B cell (primary cell): ENCODE measurements at regions of chr3 and their contacts with region 1.

Region 1: GRCh38 chr3:377158-377561 is 180.6 kb downstream of the CHL1 start:
- DNase-seq: peak; percentile 65
- ATAC-seq: no peak
- H3K4me3 ChIP-seq: no peak overlapping the region
- H3K4me3 Mint-ChIP-seq: no peak overlapping the region
- H3K27ac ChIP-seq: no peak overlapping the region
- H3K27ac Mint-ChIP-seq: no peak overlapping the region
- H3K4me1 ChIP-seq: no peaks in the 10 kb centered on the region
- H3K4me1 Mint-ChIP-seq: no peaks in the 10 kb centered on the region
- H3K27me3 ChIP-seq: no peaks in the 10 kb centered on the region
- H3K27me3 Mint-ChIP-seq: peaks cover 7% of the 10 kb centered on the region
- CTCF ChIP-seq: peak; percentile 80

Region 2: GRCh38 chr3:46576-46975 is 330.6 kb before region 1 on chr3:
- CTCF ChIA-PET with region 1: interaction called, 21 read pairs
- POLR2A ChIA-PET with region 1: no interaction called
- intact Hi-C with region 1: loop called (anchors 1 kb)
- DNase-seq: no peak
- ATAC-seq: no peak
- H3K4me3 ChIP-seq: no peak overlapping the region
- H3K4me3 Mint-ChIP-seq: no peak overlapping the region
- H3K27ac ChIP-seq: no peak overlapping the region
- H3K27ac Mint-ChIP-seq: no peak overlapping the region
- H3K4me1 ChIP-seq: no peaks in the 10 kb centered on the region
- H3K4me1 Mint-ChIP-seq: peaks cover 2% of the 10 kb centered on the region
- H3K27me3 ChIP-seq: peaks cover 0 to 6% (median under 1%) of the 10 kb centered on the region in 4 experiments
- H3K27me3 Mint-ChIP-seq: peaks cover 10% of the 10 kb centered on the region
- CTCF ChIP-seq: no peak

Region 3: GRCh38 chr3:436053-436452 is 58.9 kb after region 1 on chr3:
- CTCF ChIA-PET with region 1: no interaction called
- POLR2A ChIA-PET with region 1: no interaction called
- intact Hi-C with region 1: no loop called
- DNase-seq: no peak
- ATAC-seq: no peak
- H3K4me3 ChIP-seq: no peak overlapping the region
- H3K4me3 Mint-ChIP-seq: no peak overlapping the region
- H3K27ac ChIP-seq: no peak overlapping the region
- H3K27ac Mint-ChIP-seq: no peak overlapping the region
- H3K4me1 ChIP-seq: no peaks in the 10 kb centered on the region
- H3K4me1 Mint-ChIP-seq: no peaks in the 10 kb centered on the region
- H3K27me3 ChIP-seq: no peaks in the 10 kb centered on the region
- H3K27me3 Mint-ChIP-seq: peaks cover 11% of the 10 kb centered on the region
- CTCF ChIP-seq: no peak

Region 4: GRCh38 chr3:643376-643775 is 266.2 kb after region 1 on chr3:
- CTCF ChIA-PET with region 1: no interaction called
- POLR2A ChIA-PET with region 1: no interaction called
- intact Hi-C with region 1: no loop called
- DNase-seq: no peak
- ATAC-seq: no peak
- H3K4me3 ChIP-seq: no peak overlapping the region
- H3K4me3 Mint-ChIP-seq: no peak overlapping the region
- H3K27ac ChIP-seq: no peak overlapping the region
- H3K27ac Mint-ChIP-seq: no peak overlapping the region
- H3K4me1 ChIP-seq: no peaks in the 10 kb centered on the region
- H3K4me1 Mint-ChIP-seq: no peaks in the 10 kb centered on the region
- H3K27me3 ChIP-seq: no peaks in the 10 kb centered on the region
- H3K27me3 Mint-ChIP-seq: peaks cover 3% of the 10 kb centered on the region
- CTCF ChIP-seq: no peak